ENCODE measurements at regions of chr16 and their contacts with region 1.

Region 1: DNA sequence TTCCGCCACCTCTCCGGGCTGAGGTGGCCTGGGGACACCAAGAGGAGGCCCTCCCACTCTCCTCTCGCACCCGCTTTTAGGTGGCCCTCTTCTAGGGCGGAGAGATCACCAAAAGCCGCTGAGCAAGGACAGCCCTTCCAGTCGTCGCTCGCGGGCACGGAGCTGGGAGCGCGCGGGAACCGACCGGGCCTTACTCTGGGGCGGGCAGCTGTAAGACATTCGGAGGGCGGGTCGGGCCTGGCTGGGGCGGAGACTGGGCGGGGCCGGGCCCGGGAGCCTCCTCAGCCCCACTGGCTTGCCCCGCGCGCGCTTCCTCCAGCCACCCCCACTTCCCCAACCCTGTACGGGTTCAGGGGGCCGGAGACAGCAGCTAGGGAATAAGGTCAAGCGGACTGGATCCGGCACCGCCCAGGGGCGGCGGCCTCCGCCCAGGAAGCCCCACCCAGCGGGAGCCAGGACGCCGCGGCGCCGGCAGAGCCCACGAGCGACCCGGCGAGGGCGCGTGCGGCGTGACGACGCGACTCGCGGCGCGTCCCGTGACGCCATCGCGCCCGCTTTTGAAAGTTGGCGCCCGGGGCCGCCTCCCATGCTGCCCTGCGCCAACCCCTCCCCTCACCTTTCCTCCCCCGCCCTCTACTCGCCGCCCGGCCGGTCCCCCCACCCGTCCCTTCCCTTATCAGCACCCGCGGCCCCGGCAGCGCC is 351 bp upstream of the CTCF start:
- H3K4me3 ChIP-seq: peak overlapping the region; percentile 98
- H3K27ac ChIP-seq: peak overlapping the region; percentile 100
- H3K4me1 ChIP-seq: peaks cover 9% of the 10 kb centered on the region; the same call in 1 of the 2 replicates
- CTCF ChIP-seq: no peak

Region 2: GRCh38 chr16:67595033-67595355 is 33.0 kb after region 1 on chr16:
- CTCF ChIA-PET with region 1: interaction called, 3 read pairs
- POLR2A ChIA-PET with region 1: interaction called, 31 read pairs
- H3K4me3 ChIP-seq: no peak overlapping the region
- H3K27ac ChIP-seq: no peak overlapping the region
- H3K4me1 ChIP-seq: peaks cover 9% of the 10 kb centered on the region; the same call in 1 of the 2 replicates
- CTCF ChIP-seq: no peak

Region 3: DNA sequence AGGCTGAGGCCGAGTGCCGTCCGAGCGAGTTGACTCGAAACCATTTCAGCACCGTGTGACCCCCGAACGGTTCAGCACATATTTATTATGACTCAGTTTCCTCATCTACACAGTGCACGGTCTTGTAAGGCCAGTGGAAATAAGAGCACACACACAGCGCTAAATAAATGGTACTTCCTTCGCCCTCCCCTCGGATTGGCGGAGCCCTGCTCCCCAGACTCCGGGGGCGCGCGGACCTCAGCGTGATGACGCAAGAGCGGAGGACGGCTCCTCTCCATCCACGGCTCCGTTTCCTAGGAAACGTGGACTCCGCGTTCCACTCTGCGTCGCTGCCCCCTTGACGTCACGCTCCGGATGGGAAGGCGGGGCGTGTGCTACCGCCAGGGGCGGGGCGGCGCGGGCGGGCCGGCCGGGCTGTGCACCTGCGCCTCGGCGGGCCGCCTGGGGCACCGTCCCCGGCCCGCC is 98.6 kb after region 1 on chr16 and contains the start of gene PARD6A:
- CTCF ChIA-PET with region 1: no interaction called
- POLR2A ChIA-PET with region 1: interaction called, 20 read pairs
- H3K4me3 ChIP-seq: peak within 1 kb of the TSS; percentile 78
- H3K27ac ChIP-seq: peak within 1 kb of the TSS; percentile 75
- H3K4me1 ChIP-seq: 0 out of 2 replicates have a peak, but pooled peaks cover 4% of the 10 kb centered on the region
- CTCF ChIP-seq: no peak

Region 4: GRCh38 chr16:67685388-67686112 is 123.6 kb after region 1 on chr16:
- CTCF ChIA-PET with region 1: no interaction called
- POLR2A ChIA-PET with region 1: no interaction called
- H3K4me3 ChIP-seq: no peak overlapping the region
- H3K27ac ChIP-seq: no peak overlapping the region
- H3K4me1 ChIP-seq: no peaks in the 10 kb centered on the region
- CTCF ChIP-seq: no peak

Measured in HEK293 (cell line).